ENCODE measurements at regions of chr1 and their contacts with region 1.

Region 1: DNA sequence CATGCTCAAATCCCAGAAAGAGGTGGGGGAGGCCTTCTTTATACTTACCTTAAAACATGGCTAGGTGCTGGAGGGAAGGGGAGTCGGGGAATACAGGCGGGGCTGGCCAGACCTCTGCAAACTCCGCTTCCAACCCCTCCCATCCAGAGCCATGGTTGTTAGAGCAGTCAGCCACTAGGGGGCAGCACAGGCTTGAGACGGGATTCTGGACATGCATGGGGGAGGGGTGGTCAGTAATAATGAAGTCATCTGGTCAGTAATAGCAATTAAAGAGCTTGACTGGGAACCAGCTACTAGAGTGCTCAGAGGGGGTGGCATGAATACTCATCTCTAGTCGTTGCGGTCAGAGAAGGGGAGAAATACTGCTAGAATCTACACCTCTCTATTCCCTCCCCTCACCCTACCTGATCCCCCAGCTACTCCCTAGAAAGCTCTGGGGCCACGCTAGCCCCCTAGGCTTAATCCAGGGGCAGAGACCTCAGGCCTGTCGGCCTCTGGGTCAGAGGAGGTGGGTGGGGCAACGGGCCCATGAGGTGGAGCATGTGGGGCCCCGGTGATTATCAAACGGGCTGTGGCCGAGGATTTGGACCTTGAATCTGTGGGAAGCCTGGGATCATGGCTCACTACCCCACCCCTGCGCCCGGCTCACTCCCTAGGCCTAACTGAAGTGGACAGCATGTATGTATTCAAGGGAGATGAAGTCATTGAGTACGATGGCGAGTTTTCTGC is 2.9 kb downstream of the CASQ1 start:
- DNase-seq: peak; percentile 94
- H3K4me3 Mint-ChIP-seq: no peak overlapping the region
- H3K27ac Mint-ChIP-seq: no peak overlapping the region
- H3K4me1 Mint-ChIP-seq: no peaks in the 10 kb centered on the region
- H3K27me3 Mint-ChIP-seq: no peaks in the 10 kb centered on the region
- CTCF ChIP-seq: peak; percentile 100

Region 2: GRCh38 chr1:160176101-160176500 is 17.2 kb before region 1 on chr1:
- CTCF ChIA-PET with region 1: interaction called, 11 read pairs
- POLR2A ChIA-PET with region 1: interaction called, 4 read pairs
- intact Hi-C with region 1: no loop called
- DNase-seq: no peak
- H3K4me3 Mint-ChIP-seq: no peak overlapping the region
- H3K27ac Mint-ChIP-seq: no peak overlapping the region
- H3K4me1 Mint-ChIP-seq: peaks cover 4% of the 10 kb centered on the region
- H3K27me3 Mint-ChIP-seq: peaks cover 45% of the 10 kb centered on the region
- CTCF ChIP-seq: no peak

Region 3: DNA sequence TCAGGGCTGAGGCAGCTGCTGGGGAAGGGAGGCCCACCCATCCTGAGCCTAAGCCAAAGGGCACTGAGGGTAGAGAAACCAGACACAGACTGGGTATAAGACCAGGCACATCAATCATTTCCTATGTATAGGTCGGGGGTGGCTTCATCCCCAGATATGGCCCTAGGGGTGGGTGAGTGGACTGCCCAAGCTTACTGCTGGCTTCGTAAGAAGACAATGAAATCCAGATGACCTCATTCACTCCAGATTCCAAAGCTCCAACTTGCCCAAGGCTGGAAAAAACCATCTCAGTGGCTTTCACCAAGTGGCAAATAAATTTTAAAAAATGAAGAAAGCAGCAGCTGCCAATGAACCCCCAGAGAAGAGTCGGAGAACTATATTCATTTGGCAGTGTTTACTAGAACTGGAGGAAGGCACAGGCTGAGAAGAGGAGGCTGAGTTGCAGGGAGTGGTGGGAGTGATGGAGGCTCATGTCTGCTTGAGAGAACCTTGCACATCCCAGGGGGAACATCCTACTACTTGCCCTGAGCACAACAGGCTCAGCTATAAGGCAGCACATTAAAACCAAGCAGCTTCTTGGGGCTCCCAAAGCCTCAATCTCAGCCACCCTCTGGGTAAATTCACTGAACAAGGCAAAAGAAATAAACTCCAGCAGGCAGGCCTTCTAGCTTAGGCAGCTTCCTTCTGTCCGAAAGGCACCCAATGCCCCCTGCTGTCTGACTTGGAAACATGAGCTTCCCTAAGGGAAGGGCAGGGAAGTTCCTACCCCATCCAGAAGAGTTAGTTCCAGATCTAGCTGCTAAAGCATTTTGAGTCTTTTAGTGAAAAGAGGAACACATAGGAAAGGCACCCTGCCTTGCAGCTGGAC is 26.0 kb after region 1 on chr1:
- CTCF ChIA-PET with region 1: interaction called, 129 read pairs
- POLR2A ChIA-PET with region 1: interaction called, 9 read pairs
- intact Hi-C with region 1: loop called (anchors 1 kb)
- DNase-seq: peak; percentile 61
- H3K4me3 Mint-ChIP-seq: no peak overlapping the region
- H3K27ac Mint-ChIP-seq: no peak overlapping the region
- H3K4me1 Mint-ChIP-seq: peaks cover 7% of the 10 kb centered on the region
- H3K27me3 Mint-ChIP-seq: no peaks in the 10 kb centered on the region
- CTCF ChIP-seq: peak; percentile 47

Region 4: DNA sequence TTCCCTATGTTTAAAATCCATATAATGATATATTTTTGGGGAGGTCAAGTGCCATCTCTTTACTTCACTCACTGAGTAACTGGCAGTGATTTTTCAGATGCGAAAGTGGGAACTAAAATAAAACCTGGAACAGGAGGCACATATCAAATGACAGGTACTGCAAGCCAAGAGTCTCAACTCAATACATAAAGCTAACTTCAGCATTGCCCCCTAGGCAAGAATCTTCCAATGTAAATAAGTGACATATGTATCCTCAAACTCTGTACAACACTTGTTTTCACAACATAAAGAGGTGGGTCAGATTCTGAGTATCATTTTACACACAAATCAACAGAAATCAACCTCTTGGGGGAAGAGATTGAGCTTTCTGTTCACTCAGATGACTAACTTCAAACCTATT is 51.0 kb after region 1 on chr1:
- CTCF ChIA-PET with region 1: interaction called, 15 read pairs
- POLR2A ChIA-PET with region 1: interaction called, 6 read pairs
- intact Hi-C with region 1: no loop called
- DNase-seq: no peak
- H3K4me3 Mint-ChIP-seq: no peak overlapping the region
- H3K27ac Mint-ChIP-seq: no peak overlapping the region
- H3K4me1 Mint-ChIP-seq: peaks cover 7% of the 10 kb centered on the region
- H3K27me3 Mint-ChIP-seq: no peaks in the 10 kb centered on the region
- CTCF ChIP-seq: no peak

Region 5: DNA sequence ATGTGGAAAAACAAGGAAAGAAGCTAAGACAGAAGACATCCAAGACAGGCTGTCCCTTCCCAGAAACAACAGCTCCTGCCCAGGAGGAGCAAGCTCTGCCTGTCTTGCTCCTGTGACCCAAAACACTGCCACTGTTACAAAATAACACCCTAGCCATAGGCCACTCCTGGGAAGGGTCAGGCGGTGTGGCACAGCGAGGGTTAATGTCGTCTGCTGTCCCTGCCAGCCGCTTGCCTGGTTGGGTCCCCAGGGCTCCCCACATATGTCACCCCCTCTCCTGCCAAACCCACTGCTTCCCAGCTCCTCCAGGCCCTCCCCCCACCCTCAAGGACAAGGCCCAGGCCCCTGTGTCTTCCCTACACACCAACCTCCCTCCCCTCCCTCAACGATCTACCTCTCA is 169.8 kb after region 1 on chr1:
- CTCF ChIA-PET with region 1: no interaction called
- POLR2A ChIA-PET with region 1: no interaction called
- intact Hi-C with region 1: no loop called
- DNase-seq: no peak
- H3K4me3 Mint-ChIP-seq: no peak overlapping the region
- H3K27ac Mint-ChIP-seq: no peak overlapping the region
- H3K4me1 Mint-ChIP-seq: peaks cover 5% of the 10 kb centered on the region
- H3K27me3 Mint-ChIP-seq: peaks cover 10% of the 10 kb centered on the region
- CTCF ChIP-seq: no peak

Region 6: GRCh38 chr1:160376525-160377131 is 183.4 kb after region 1 on chr1:
- CTCF ChIA-PET with region 1: interaction called, 8 read pairs
- POLR2A ChIA-PET with region 1: no interaction called
- intact Hi-C with region 1: loop called (anchors 1 kb)
- DNase-seq: peak; percentile 81
- H3K4me3 Mint-ChIP-seq: no peak overlapping the region
- H3K27ac Mint-ChIP-seq: no peak overlapping the region
- H3K4me1 Mint-ChIP-seq: peaks cover 13% of the 10 kb centered on the region
- H3K27me3 Mint-ChIP-seq: peaks cover 19% of the 10 kb centered on the region
- CTCF ChIP-seq: peak; percentile 98

Region 7: GRCh38 chr1:160813215-160813614 is 620.0 kb after region 1 on chr1:
- CTCF ChIA-PET with region 1: no interaction called
- POLR2A ChIA-PET with region 1: no interaction called
- intact Hi-C with region 1: no loop called
- DNase-seq: peak; percentile 72
- H3K4me3 Mint-ChIP-seq: no peak overlapping the region
- H3K27ac Mint-ChIP-seq: no peak overlapping the region
- H3K4me1 Mint-ChIP-seq: peaks cover 10% of the 10 kb centered on the region
- H3K27me3 Mint-ChIP-seq: no peaks in the 10 kb centered on the region
- CTCF ChIP-seq: no peak

Measured in MCF 10A (cell line).